ENCODE measurements at regions of chr17 and their contacts with region 1.

Region 1: DNA sequence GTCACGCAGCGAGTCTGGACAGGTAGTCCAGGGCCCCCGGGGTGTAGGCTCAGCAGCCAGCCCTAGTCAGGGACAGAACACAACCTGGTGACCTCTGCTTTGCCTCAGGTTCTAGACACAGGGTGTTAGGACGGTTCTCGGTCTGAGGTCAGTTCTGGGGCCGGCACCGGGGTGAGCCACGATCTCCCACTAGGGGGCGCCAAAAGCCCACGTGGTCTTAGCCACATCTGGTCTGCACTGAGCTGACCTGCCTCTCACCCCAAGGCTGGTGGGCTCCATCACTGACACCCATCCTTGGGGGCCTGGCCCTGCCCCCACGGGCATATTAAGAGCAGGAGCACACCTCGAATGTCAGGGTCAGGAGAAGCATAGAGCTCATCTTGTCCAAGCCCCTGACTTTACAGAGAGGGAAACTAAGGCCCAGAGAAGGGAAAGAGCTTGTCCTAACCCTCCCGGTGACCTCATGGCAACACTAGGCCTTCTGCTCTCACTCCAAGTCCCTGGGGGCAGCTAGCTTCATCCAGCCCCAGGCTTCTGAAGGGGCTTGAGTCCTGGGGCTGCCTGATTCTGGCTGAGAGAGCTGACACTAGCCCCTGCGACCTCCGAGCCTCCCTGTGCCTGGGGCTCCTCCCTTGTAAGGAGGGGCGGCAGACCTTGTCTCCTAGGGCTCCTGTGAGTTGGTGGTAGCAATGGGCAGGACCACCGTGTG is 9.0 kb downstream of the SLC5A10 start:
- DNase-seq: peak; percentile 56 to 79 (median 67)
- H3K4me3 ChIP-seq: no peak overlapping the region
- H3K4me3 Mint-ChIP-seq: no peak overlapping the region
- H3K27ac ChIP-seq: no peak overlapping the region
- H3K27ac Mint-ChIP-seq: peak overlapping the region in 2 of 8 donors; percentile 36 to 37
- H3K4me1 ChIP-seq: peaks cover 17% of the 10 kb centered on the region
- H3K4me1 Mint-ChIP-seq: peaks cover 9 to 21% (median 17%) of the 10 kb centered on the region in 3 donors
- H3K27me3 ChIP-seq: no peaks in the 10 kb centered on the region
- H3K27me3 Mint-ChIP-seq: peaks cover 0 to 2% of the 10 kb centered on the region in 2 donors

Region 2: DNA sequence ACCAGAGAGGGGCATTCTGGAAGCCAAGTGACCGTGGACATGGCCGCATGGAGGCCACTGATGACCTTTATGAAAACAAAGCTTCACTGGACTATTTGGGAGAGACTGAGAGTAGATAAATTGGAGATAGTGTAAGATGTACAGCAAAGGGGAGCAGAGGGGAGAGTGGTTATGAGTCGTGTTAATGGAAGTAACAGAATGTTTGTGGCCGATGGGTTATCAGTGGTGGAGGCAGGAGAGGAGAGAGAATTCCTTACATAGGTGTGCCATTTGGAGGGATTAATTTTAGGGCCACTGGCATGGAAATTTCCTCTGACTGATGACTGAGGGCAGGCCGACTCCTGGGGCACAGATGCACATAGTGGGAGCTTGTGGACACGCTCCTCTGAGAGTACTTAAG is 83.9 kb before region 1 on chr17:
- CTCF ChIA-PET with region 1: no interaction called
- POLR2A ChIA-PET with region 1: no interaction called
- DNase-seq: no peak
- H3K4me3 ChIP-seq: no peak overlapping the region
- H3K4me3 Mint-ChIP-seq: no peak overlapping the region
- H3K27ac ChIP-seq: no peak overlapping the region
- H3K27ac Mint-ChIP-seq: peak overlapping the region in 1 of 8 donors; percentile 55
- H3K4me1 ChIP-seq: no peaks in the 10 kb centered on the region
- H3K4me1 Mint-ChIP-seq: peaks cover 0 to 4% (median 2%) of the 10 kb centered on the region in 3 donors
- H3K27me3 ChIP-seq: no peaks in the 10 kb centered on the region
- H3K27me3 Mint-ChIP-seq: no peaks in the 10 kb centered on the region

Region 3: DNA sequence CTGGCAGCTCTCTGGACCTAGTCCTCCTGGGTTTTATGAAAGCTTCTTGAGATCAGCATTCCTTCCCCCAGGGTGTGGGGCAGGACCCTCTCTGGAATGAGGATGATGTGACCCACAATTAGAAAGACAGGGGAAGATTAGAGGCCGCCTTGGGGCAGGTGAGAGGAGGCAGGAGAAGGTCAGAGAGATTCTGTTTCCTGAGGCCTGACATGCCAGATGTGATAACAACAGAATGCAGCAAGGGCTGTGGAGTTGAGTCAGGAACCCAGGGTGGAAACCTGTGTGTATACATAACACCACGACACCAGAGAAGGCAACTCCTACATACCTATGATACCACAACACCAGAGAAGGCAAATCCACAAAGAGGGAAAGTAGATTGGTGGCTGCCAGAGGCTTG is 14.4 kb before region 1 on chr17:
- CTCF ChIA-PET with region 1: interaction called, 11 read pairs
- POLR2A ChIA-PET with region 1: no interaction called
- DNase-seq: no peak
- H3K4me3 ChIP-seq: no peak overlapping the region
- H3K4me3 Mint-ChIP-seq: no peak overlapping the region
- H3K27ac ChIP-seq: no peak overlapping the region
- H3K27ac Mint-ChIP-seq: no peak overlapping the region
- H3K4me1 ChIP-seq: no peaks in the 10 kb centered on the region
- H3K4me1 Mint-ChIP-seq: no peaks in the 10 kb centered on the region
- H3K27me3 ChIP-seq: no peaks in the 10 kb centered on the region
- H3K27me3 Mint-ChIP-seq: peaks cover 6 to 10% of the 10 kb centered on the region in 2 donors

Region 4: GRCh38 chr17:19004421-19005136 is 43.6 kb after region 1 on chr17 and contains the start of gene FAM83G:
- CTCF ChIA-PET with region 1: interaction called, 10 read pairs
- POLR2A ChIA-PET with region 1: interaction called, 3 read pairs
- DNase-seq: peak; percentile 79 to 93 (median 83)
- H3K4me3 ChIP-seq: peak within 1 kb of the TSS; percentile 59
- H3K4me3 Mint-ChIP-seq: peak within 1 kb of the TSS; percentile 87 to 98 (median 91)
- H3K27ac ChIP-seq: peak within 1 kb of the TSS; percentile 59
- H3K27ac Mint-ChIP-seq: peak within 1 kb of the TSS; percentile 78 to 99 (median 95)
- H3K4me1 ChIP-seq: peaks cover 36% of the 10 kb centered on the region
- H3K4me1 Mint-ChIP-seq: peaks cover 26 to 45% (median 32%) of the 10 kb centered on the region in 3 donors
- H3K27me3 ChIP-seq: no peaks in the 10 kb centered on the region
- H3K27me3 Mint-ChIP-seq: no peaks in the 10 kb centered on the region
- total RNA-seq, gene FAM83G: 13.1 to 14.6 TPM

Region 5: GRCh38 chr17:19024101-19025078 is 63.4 kb after region 1 on chr17:
- CTCF ChIA-PET with region 1: interaction called, 13 read pairs
- POLR2A ChIA-PET with region 1: no interaction called
- DNase-seq: peak in 2 of 5 donors; percentile 26 to 45
- H3K4me3 ChIP-seq: no peak overlapping the region
- H3K4me3 Mint-ChIP-seq: peak overlapping the region in 1 of 7 donors; percentile 39
- H3K27ac ChIP-seq: no peak overlapping the region
- H3K27ac Mint-ChIP-seq: peak overlapping the region in 7 of 8 donors; percentile 1 to 87 (median 48)
- H3K4me1 ChIP-seq: peaks cover 14% of the 10 kb centered on the region
- H3K4me1 Mint-ChIP-seq: peaks cover 13 to 15% (median 14%) of the 10 kb centered on the region in 3 donors
- H3K27me3 ChIP-seq: no peaks in the 10 kb centered on the region
- H3K27me3 Mint-ChIP-seq: no peaks in the 10 kb centered on the region

Measured in CD8-positive, alpha-beta memory T cell (primary cell).